Natural killer cell (primary cell): ENCODE measurements at regions of chr13 and their contacts with region 1.

Region 1: GRCh38 chr13:32267836-32268439 is 47.2 kb downstream of the ZAR1L start:
- DNase-seq: peak; percentile 33 to 68
- ATAC-seq: peak in 1 of 3 donors; percentile 92
- H3K4me3 ChIP-seq: no peak overlapping the region
- H3K4me3 Mint-ChIP-seq: no peak overlapping the region
- H3K27ac ChIP-seq: no peak overlapping the region
- H3K27ac Mint-ChIP-seq: no peak overlapping the region
- H3K4me1 ChIP-seq: no peaks in the 10 kb centered on the region
- H3K4me1 Mint-ChIP-seq: no peaks in the 10 kb centered on the region
- H3K27me3 ChIP-seq: no peaks in the 10 kb centered on the region
- H3K27me3 Mint-ChIP-seq: no peaks in the 10 kb centered on the region
- CTCF ChIP-seq: peak; percentile 61

Region 2: DNA sequence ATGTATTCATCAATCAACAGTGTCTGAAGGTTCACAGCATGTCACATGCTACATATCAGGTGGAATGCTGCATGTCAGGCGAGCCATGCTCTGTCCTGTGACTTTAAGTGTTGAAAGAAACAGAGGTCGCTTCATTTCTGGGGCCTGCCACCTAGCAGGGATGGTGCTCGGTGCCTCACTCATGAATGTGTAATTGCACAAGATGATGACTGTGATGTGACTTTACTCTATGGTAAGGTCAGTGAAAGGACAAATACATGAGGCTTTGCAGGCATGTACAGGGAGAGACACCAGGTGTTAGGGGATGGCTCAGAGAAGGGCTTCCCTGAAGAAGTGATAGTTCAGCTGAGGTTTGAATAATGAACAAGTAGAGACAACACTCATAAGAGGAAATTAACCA is 169.7 kb before region 1 on chr13:
- intact Hi-C with region 1: no loop called
- DNase-seq: no peak
- ATAC-seq: no peak
- H3K4me3 ChIP-seq: no peak overlapping the region
- H3K4me3 Mint-ChIP-seq: no peak overlapping the region
- H3K27ac ChIP-seq: no peak overlapping the region
- H3K27ac Mint-ChIP-seq: no peak overlapping the region
- H3K4me1 ChIP-seq: no peaks in the 10 kb centered on the region
- H3K4me1 Mint-ChIP-seq: no peaks in the 10 kb centered on the region
- H3K27me3 ChIP-seq: no peaks in the 10 kb centered on the region
- H3K27me3 Mint-ChIP-seq: no peaks in the 10 kb centered on the region
- CTCF ChIP-seq: no peak

Region 3: GRCh38 chr13:32443111-32443510 is 175.2 kb after region 1 on chr13:
- intact Hi-C with region 1: loop called (anchors 10 kb)
- DNase-seq: peak in 1 of 2 donors; percentile 76
- ATAC-seq: peak in 2 of 3 donors; percentile 68 to 70
- H3K4me3 ChIP-seq: no peak overlapping the region
- H3K4me3 Mint-ChIP-seq: no peak overlapping the region
- H3K27ac ChIP-seq: no peak overlapping the region
- H3K27ac Mint-ChIP-seq: no peak overlapping the region
- H3K4me1 ChIP-seq: no peaks in the 10 kb centered on the region
- H3K4me1 Mint-ChIP-seq: peaks cover 0 to 5% of the 10 kb centered on the region in 2 donors
- H3K27me3 ChIP-seq: no peaks in the 10 kb centered on the region
- H3K27me3 Mint-ChIP-seq: no peaks in the 10 kb centered on the region
- CTCF ChIP-seq: peak; percentile 46

Region 4: DNA sequence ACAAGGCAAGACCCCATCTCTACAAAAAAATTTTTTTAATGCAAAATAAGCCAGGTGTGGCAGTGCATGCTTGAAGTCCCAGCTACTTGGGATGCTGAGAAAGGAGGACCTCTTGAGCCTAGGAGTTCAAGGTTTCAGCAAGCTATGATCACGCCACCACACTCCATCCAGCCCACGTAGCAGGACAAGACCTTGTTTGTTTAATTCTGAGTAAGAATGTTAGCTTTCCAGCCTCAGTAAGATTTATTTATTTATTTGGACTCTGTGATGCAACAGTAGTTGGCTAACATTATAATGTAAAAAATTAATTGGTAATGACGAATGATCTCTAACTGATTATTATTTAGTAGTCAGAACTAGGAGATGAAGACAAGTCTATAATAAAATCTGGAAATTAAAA is 247.3 kb after region 1 on chr13:
- intact Hi-C with region 1: no loop called
- DNase-seq: no peak
- ATAC-seq: no peak
- H3K4me3 ChIP-seq: no peak overlapping the region
- H3K4me3 Mint-ChIP-seq: no peak overlapping the region
- H3K27ac ChIP-seq: no peak overlapping the region
- H3K27ac Mint-ChIP-seq: no peak overlapping the region
- H3K4me1 ChIP-seq: no peaks in the 10 kb centered on the region
- H3K4me1 Mint-ChIP-seq: peaks cover 0 to 10% of the 10 kb centered on the region in 2 donors
- H3K27me3 ChIP-seq: no peaks in the 10 kb centered on the region
- H3K27me3 Mint-ChIP-seq: no peaks in the 10 kb centered on the region
- CTCF ChIP-seq: no peak